Aorta (tissue), 5 donors: ENCODE measurements at regions of chr21 and their contacts with region 1.

Region 1: GRCh38 chr21:36966066-36966820 is at the start of gene HLCS:
- DNase-seq: peak in 1 of 2 donors; percentile 80
- ATAC-seq: peak; percentile 83
- H3K4me3 ChIP-seq: peak within 1 kb of the TSS; percentile 89 to 97
- H3K27ac ChIP-seq: peak within 1 kb of the TSS; percentile 0 to 50
- H3K4me1 ChIP-seq: no peaks in the 10 kb centered on the region
- H3K27me3 ChIP-seq: no peaks in the 10 kb centered on the region
- total RNA-seq, gene HLCS: 17.3 to 19.7 TPM

Region 2: GRCh38 chr21:36989699-36990507 is 23.7 kb after region 1 on chr21:
- intact Hi-C with region 1: loop called in 1 of 2 experiments (anchors 1 kb)
- DNase-seq: peak; percentile 96 to 98
- ATAC-seq: peak; percentile 98
- H3K4me3 ChIP-seq: peak overlapping the region in 1 of 2 donors; percentile 34
- H3K27ac ChIP-seq: peak overlapping the region in 1 of 2 donors; percentile 72
- H3K4me1 ChIP-seq: no peaks in the 10 kb centered on the region
- H3K27me3 ChIP-seq: no peaks in the 10 kb centered on the region